ENCODE measurements at regions of chr11 and their contacts with region 1.

Region 1: DNA sequence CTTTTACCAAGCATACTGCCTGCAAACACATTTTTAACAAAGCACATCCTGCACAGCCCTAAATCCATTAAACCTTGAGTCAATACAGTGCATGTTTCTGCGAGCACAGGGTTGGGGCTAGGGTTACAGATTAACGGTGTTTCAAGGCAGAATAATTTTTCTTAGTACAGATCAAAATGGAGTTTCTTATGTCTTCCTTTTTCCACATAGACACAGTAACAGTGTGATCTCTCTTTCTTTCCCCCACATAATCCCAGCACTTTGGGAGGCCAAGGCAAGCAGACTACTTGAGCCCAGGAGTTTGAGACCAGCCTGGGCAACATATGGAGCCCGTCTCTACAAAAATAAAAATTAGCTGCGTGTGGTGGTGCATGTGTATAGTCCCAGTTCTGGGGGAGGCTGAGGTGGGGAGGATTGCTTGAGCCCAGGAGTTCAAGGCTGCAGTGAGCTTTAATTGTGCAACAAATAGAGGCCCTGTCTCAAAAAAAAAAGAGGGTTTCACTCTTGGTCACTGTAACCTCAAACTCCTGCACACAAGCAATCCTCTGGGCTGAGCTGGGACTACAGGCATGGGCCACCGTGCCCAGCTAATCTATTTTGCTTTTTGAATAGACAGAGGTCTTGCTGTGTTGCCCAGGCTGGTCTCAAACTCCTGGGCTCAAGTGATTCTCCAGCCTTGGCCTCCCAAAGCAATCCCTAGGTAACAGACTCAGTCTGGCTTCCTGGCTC is 19.7 kb upstream of the SLC3A2 start:
- DNase-seq: no peak
- ATAC-seq: no peak
- H3K4me3 ChIP-seq: no peak overlapping the region
- H3K27ac ChIP-seq: no peak overlapping the region
- H3K4me1 ChIP-seq: peaks cover 0 to 24% (median 6%) of the 10 kb centered on the region in 9 donors
- H3K27me3 ChIP-seq: no peaks in the 10 kb centered on the region
- CTCF ChIP-seq: no peak

Region 2: DNA sequence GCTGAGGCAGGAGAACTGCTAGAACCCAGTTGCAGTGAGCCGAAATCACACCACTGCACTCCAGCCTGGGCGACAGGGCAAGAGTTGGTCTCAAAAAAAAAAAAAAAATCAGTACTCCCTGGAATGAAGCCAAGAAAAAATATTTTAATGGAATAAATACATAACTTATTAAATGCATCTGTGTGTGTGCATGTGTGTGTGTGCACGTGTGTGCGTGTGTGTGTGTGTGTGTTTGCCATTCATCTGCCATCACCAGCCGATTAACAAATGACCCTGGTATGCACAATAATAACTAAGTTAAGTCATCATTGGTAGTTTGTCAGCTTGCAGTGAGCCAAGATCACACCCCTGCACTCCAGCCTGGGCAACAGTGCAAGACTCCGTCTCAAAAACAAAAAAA is 477.2 kb before region 1 on chr11:
- intact Hi-C with region 1: loop called in 1 of 10 experiments (anchors 10 kb)
- DNase-seq: no peak
- ATAC-seq: no peak
- H3K4me3 ChIP-seq: no peak overlapping the region
- H3K27ac ChIP-seq: no peak overlapping the region
- H3K4me1 ChIP-seq: peaks cover 0 to 9% (median 6%) of the 10 kb centered on the region in 9 donors
- H3K27me3 ChIP-seq: no peaks in the 10 kb centered on the region
- CTCF ChIP-seq: no peak

Region 3: DNA sequence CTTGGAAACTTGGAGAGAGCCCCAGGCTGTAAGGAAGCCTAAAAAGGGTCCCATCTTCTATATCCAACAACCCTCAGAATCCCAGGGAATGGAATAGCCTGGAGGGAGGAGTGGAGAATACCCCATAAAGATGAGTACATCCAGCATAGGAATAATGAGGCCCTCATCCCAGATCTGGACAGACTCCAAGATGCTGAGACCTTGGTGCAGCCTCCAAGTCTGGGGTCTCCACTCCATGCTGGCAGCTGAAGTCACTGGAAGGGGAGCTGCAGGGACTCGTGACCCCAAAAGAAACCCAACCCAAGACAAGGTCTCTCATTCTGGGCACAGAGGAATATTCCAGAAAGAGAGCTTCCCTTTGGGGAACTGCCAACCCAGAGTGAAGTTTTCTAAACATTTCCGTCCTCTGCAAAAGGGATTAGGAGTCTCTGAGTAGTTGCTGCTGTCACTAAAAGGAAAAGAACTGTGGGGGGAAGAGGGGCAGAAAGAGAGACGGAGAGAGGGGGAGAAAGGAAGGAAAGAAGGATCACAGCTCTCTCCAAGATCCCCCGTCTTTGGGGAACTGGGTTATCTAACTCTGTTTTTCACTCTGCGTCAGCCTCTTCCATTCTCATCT is 441.6 kb before region 1 on chr11:
- intact Hi-C with region 1: loop called in 1 of 10 experiments (anchors 10 kb)
- DNase-seq: no peak
- ATAC-seq: peak in 4 of 8 donors; percentile 38 to 52 (median 48)
- H3K4me3 ChIP-seq: no peak overlapping the region
- H3K27ac ChIP-seq: peak overlapping the region in 9 of 10 donors; percentile 5 to 77 (median 46)
- H3K4me1 ChIP-seq: peaks cover 0 to 18% (median 10%) of the 10 kb centered on the region in 9 donors
- H3K27me3 ChIP-seq: no peaks in the 10 kb centered on the region
- CTCF ChIP-seq: no peak

Region 4: DNA sequence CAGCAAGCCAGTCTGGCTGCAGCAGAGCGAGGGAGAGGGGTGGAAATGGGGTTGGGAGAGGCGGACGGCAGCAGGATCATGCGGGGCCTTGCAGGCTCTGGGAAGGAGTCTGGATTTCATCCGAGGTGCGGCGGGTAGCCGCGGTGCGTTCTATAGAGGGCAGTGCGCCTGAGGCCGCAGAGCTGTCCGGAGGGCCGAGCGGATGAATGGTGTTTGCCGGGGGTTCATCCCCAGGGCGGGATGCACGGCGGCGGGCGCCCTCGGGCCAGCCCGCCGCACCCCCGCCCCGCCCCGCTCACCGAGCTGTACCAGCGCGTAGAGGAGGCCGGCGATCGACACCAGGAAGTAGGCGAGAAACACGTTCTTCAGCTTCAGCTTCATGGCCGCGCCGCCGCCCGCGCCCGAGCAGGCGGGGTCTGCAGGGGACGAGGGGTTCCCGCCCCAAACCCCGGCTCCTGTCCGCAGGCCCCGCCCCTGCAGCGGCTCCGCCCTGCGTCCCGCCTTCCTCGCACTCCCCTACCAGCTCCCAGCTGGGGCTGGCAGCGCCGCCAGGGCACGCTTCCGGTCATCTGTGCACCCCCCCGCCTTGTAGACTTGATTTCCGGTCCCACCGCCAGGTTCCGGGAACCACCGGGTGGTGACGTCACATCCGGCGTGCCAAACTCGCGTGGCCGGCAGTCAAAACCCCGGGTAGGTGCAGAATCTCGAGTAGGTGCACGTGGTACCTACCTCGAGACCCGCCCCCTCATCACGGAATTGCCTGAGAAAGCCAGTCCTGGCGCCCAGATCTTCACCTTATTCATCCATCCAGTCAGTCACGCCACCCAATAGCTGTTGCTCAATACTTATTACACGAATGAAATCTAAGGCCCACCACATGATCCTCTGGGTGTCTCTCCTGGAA is 239.2 kb before region 1 on chr11 and contains the start of gene B3GAT3:
- intact Hi-C with region 1: no loop called
- DNase-seq: peak; percentile 96 to 98
- ATAC-seq: peak; percentile 97 to 99 (median 98)
- H3K4me3 ChIP-seq: peak within 1 kb of the TSS; percentile 50 to 92 (median 74)
- H3K27ac ChIP-seq: peak within 1 kb of the TSS; percentile 44 to 95 (median 89)
- H3K4me1 ChIP-seq: peaks cover 4 to 27% (median 21%) of the 10 kb centered on the region in 9 donors
- H3K27me3 ChIP-seq: no peaks in the 10 kb centered on the region
- CTCF ChIP-seq: peak in 3 of 9 donors; percentile 9 to 11 (median 9)
- total RNA-seq, gene B3GAT3: 6.8 to 20.7 (median 10.6) TPM

Region 5: DNA sequence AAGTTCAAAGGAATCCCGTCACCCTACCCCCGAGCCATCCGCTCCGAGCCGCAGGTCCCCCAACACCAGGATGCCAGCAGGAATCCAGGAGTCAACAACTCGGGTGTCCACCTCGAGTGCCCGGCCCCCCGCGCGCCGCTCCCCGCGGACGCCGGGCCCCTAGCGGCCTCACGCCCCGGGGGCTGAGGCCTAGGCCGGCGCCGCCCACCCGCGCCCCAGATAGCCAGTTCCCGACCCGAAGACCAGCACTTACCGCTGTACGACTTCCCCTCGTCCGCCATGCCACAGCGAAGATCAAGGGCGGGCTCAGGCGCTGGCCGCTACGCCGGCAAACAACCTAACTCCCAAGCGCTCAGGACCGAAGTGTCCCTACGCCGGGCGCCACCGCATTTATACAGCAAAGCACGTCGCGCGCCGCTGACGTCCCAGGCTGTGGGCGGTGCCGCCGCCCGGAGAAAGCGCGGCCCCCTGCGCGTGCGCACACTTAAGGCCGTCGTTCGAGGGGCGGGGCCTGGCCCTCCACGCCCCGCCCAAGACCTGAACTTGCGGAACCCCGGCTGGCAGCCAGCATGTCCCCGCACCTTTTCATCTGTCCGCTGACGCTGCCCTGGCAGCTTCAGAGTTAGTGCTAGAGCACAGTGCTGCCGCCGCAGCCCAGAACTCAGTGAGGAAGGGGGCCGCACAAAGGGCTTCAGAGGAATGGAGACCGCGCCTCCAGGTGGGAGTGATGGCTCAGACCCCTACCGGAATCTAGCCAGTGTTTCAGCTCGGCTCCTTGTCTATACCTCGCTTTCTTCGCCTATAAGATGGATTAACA is 55.7 kb before region 1 on chr11 and contains the start of gene NXF1:
- intact Hi-C with region 1: no loop called
- DNase-seq: peak; percentile 94 to 96
- ATAC-seq: peak; percentile 92 to 97 (median 96)
- H3K4me3 ChIP-seq: peak within 1 kb of the TSS; percentile 36 to 88 (median 82)
- H3K27ac ChIP-seq: peak within 1 kb of the TSS; percentile 61 to 95 (median 90)
- H3K4me1 ChIP-seq: peaks cover 14 to 47% (median 31%) of the 10 kb centered on the region in 9 donors
- H3K27me3 ChIP-seq: no peaks in the 10 kb centered on the region
- CTCF ChIP-seq: peak in 2 of 9 donors; percentile 12 to 25
- total RNA-seq, gene NXF1: 28.3 to 58.7 (median 36.7) TPM

Region 6: DNA sequence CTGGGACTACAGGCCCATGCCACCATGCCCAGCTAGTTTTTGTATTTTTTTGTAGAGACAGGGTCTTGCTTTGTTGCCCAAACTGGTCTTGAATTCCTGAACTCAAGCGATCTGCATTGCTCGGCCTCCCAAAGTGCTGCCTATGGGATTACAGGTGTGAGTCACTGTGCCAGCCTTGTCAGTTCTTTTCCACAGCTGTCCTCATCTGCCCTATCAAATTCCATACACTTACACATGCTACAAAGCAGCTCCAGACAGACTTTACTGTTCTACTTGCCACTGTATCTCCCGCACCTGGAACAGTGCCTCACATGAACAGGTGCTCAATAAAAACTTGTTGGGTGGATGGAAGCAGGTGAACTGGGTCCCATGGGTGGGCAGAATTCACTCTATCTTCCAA is 37.3 kb before region 1 on chr11:
- intact Hi-C with region 1: no loop called
- DNase-seq: no peak
- ATAC-seq: no peak
- H3K4me3 ChIP-seq: no peak overlapping the region
- H3K27ac ChIP-seq: no peak overlapping the region
- H3K4me1 ChIP-seq: peaks cover 0 to 12% (median 5%) of the 10 kb centered on the region in 9 donors
- H3K27me3 ChIP-seq: no peaks in the 10 kb centered on the region
- CTCF ChIP-seq: no peak

Measured in heart right ventricle (tissue), 16 donors.